Heart right ventricle (tissue), 16 donors: ENCODE measurements at regions of chr11 and their contacts with region 1.

Region 1: DNA sequence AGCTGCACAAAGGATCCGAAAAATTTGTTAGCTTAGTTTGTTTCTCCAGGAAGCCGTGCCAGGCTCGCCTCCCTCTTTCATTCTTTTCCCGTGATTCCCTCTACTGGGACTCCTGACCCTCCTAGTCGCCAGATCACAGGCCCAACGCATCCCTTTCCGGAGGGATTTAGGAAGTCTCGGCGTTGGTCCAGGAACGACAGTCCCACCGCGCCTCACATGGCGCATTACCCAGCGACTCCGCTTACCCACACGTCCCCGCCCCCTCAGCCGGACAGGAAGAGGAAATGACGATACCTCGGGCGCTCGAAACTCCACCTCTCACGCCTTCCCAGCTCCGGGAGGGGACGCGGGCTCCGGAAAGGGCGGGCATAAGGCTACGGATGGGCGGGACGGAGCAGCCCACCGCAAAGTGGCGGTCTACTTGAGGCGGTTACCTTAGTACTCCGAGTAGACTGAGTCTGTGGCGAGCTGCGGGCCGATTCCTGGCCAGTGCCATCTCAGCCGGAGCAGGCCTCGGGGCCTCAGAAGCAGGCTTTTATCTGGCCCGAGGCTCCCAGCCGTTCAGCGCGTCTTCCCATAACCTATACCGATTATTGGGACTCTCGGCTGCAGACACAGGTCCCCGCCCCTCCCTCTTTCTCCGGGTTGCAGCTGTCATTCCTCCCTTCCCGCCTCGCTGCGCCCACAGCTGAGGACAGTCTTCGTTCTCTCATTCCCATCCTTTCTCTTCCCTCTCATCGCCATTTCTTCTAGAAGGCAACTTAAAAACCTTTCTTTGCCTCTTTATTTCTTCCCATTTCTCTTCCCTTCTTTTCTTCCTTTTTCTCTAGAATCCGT is at the start of gene CCDC15:
- DNase-seq: peak; percentile 97 to 98
- ATAC-seq: peak; percentile 100
- H3K4me3 ChIP-seq: peak within 1 kb of the TSS; percentile 61 to 87 (median 70)
- H3K27ac ChIP-seq: peak within 1 kb of the TSS in 9 of 10 donors; percentile 76 to 91 (median 87)
- H3K4me1 ChIP-seq: peaks cover 2 to 16% (median 10%) of the 10 kb centered on the region in 9 donors
- H3K27me3 ChIP-seq: no peaks in the 10 kb centered on the region
- CTCF ChIP-seq: no peak
- total RNA-seq, gene CCDC15: 0.07 to 0.83 (median 0.20) TPM

Region 2: GRCh38 chr11:124875943-124876817 is 77.8 kb before region 1 on chr11:
- intact Hi-C with region 1: loop called in 2 of 10 experiments (anchors 5 kb)
- DNase-seq: peak; percentile 87 to 89
- ATAC-seq: peak; percentile 89 to 93 (median 90)
- H3K4me3 ChIP-seq: peak overlapping the region; percentile 36 to 72 (median 66)
- H3K27ac ChIP-seq: peak overlapping the region; percentile 10 to 96 (median 90)
- H3K4me1 ChIP-seq: peaks cover 3 to 44% (median 23%) of the 10 kb centered on the region in 9 donors
- H3K27me3 ChIP-seq: peaks cover 0 to 66% (median 40%) of the 10 kb centered on the region in 7 donors
- CTCF ChIP-seq: peak; percentile 53 to 94 (median 73)

Region 3: DNA sequence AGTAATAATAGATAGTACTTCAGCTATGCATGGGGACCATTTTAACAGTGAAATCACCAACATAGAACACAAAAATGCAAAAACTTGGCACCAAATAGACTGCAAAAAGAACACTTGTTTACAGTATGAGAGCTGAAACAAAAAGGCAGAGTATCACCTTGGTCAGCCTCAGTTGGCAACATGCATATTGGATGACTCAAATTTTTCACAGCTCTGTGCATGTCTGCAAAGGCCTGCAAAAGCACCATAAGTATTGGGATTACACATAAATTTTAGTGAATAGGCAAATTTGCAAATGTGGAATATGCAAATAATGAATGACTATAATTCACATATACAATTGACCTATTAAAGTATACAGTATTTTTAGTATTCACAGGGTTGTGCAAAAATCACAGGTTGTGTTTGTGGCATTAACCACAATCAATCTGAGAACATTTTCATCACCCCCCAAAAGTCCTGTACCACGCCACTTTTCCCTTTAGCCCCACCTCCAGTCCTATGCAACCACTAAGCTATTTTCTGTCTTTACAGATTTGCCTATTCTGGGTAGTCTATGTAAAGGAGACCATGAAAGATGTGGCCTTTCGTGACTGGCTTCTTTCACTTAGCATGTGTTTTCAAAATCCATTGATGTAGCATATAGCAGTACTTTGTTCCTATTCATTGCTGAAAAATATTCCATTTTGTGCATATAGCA is 47.3 kb after region 1 on chr11:
- intact Hi-C with region 1: no loop called
- DNase-seq: no peak
- ATAC-seq: no peak
- H3K4me3 ChIP-seq: no peak overlapping the region
- H3K27ac ChIP-seq: no peak overlapping the region
- H3K4me1 ChIP-seq: no peaks in the 10 kb centered on the region
- H3K27me3 ChIP-seq: no peaks in the 10 kb centered on the region
- CTCF ChIP-seq: no peak

Region 4: GRCh38 chr11:125111343-125112207 is 157.6 kb after region 1 on chr11 and contains the start of gene TMEM218:
- intact Hi-C with region 1: loop called in 1 of 10 experiments (anchors 10 kb)
- DNase-seq: peak; percentile 99 to 100
- ATAC-seq: peak; percentile 99 to 100 (median 100)
- H3K4me3 ChIP-seq: peak within 1 kb of the TSS; percentile 64 to 93 (median 76)
- H3K27ac ChIP-seq: peak within 1 kb of the TSS in 9 of 10 donors; percentile 47 to 80 (median 74)
- H3K4me1 ChIP-seq: peaks cover 0 to 15% (median 9%) of the 10 kb centered on the region in 9 donors
- H3K27me3 ChIP-seq: peaks cover 0 to 3% (median 0%) of the 10 kb centered on the region in 7 donors
- CTCF ChIP-seq: no peak
- total RNA-seq, gene TMEM218: 4.5 to 7.8 (median 6.7) TPM

Region 5: DNA sequence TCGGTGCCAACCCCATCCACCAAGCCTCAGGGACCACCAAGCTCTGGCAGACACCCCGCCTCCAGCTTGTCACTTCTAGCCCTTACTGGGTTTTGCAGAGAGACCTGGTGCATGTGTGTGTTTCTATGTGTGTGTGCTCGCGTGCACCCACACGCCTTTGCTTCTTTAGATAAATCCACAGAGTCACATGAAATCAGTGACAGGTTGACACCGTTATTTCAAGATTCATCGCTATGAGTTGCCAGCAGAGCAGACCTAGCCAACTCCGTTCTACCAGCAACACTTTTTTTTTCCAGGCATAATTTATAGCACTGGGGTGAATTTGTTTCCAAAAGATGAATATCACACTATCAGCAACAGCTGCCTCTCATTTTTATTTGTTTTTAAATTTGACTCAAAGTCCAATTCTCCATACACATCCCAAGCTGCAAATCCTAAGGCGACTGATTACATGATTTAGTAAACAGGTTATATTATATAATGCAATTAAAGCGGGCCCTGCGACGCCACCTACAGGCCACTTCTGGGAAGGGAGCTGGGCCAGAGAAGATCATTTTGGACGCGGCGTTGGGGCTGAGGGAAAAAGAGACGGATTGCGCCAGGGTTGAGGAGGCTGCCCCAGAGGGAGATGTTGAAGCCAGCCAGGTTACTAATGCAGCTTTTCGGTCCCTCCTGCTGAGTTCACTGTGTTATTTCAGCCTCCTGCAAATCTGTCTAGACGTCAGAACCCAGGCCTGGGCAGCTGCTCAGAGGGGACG is 391.6 kb after region 1 on chr11:
- intact Hi-C with region 1: loop called in 3 of 10 experiments (anchors 10 kb)
- DNase-seq: peak; percentile 81 to 85
- ATAC-seq: peak; percentile 76 to 88 (median 82)
- H3K4me3 ChIP-seq: no peak overlapping the region
- H3K27ac ChIP-seq: peak overlapping the region in 9 of 10 donors; percentile 31 to 81 (median 64)
- H3K4me1 ChIP-seq: peaks cover 3 to 43% (median 23%) of the 10 kb centered on the region in 9 donors
- H3K27me3 ChIP-seq: no peaks in the 10 kb centered on the region
- CTCF ChIP-seq: peak; percentile 75 to 93 (median 88)

Region 6: GRCh38 chr11:125429166-125429707 is 475.3 kb after region 1 on chr11:
- intact Hi-C with region 1: loop called in 2 of 10 experiments (anchors 10 kb)
- DNase-seq: peak; percentile 53 to 64
- ATAC-seq: peak in 1 of 8 donors; percentile 57
- H3K4me3 ChIP-seq: no peak overlapping the region
- H3K27ac ChIP-seq: no peak overlapping the region
- H3K4me1 ChIP-seq: peaks cover 0 to 44% (median 16%) of the 10 kb centered on the region in 9 donors
- H3K27me3 ChIP-seq: no peaks in the 10 kb centered on the region
- CTCF ChIP-seq: peak; percentile 39 to 74 (median 65)

Region 7: GRCh38 chr11:125874556-125875124 is 920.7 kb after region 1 on chr11:
- intact Hi-C with region 1: loop called in 1 of 10 experiments (anchors 10 kb)
- DNase-seq: peak in 1 of 2 donors; percentile 67
- ATAC-seq: peak; percentile 67 to 95 (median 92)
- H3K4me3 ChIP-seq: peak overlapping the region in 6 of 10 donors; percentile 12 to 42 (median 22)
- H3K27ac ChIP-seq: no peak overlapping the region
- H3K4me1 ChIP-seq: peaks cover 0 to 4% (median 0%) of the 10 kb centered on the region in 9 donors
- H3K27me3 ChIP-seq: no peaks in the 10 kb centered on the region
- CTCF ChIP-seq: peak; percentile 51 to 85 (median 75)